Panc1 (cell line): ENCODE measurements at regions of chr11 and their contacts with region 1.

Region 1: GRCh38 chr11:77283101-77283500 is 18.4 kb downstream of the GDPD4 start:
- DNase-seq: no peak
- ATAC-seq: no peak
- H3K4me3 ChIP-seq: no peak overlapping the region
- H3K27ac ChIP-seq: no peak overlapping the region
- H3K4me1 ChIP-seq: no peaks in the 10 kb centered on the region
- H3K27me3 ChIP-seq: no peaks in the 10 kb centered on the region
- CTCF ChIP-seq: 0 out of 2 replicates have a peak, but pooled peaks have one; percentile 6

Region 2: GRCh38 chr11:77217156-77217555 is 65.9 kb before region 1 on chr11:
- CTCF ChIA-PET with region 1: no interaction called
- POLR2A ChIA-PET with region 1: no interaction called
- in situ Hi-C with region 1: no loop called
- intact Hi-C with region 1: no loop called
- DNase-seq: no peak
- ATAC-seq: no peak
- H3K4me3 ChIP-seq: no peak overlapping the region
- H3K27ac ChIP-seq: no peak overlapping the region
- H3K4me1 ChIP-seq: no peaks in the 10 kb centered on the region
- H3K27me3 ChIP-seq: peaks cover 3% of the 10 kb centered on the region
- CTCF ChIP-seq: no peak

Region 3: GRCh38 chr11:77244243-77245027 is 38.7 kb before region 1 on chr11:
- CTCF ChIA-PET with region 1: no interaction called
- POLR2A ChIA-PET with region 1: interaction called, 11 read pairs
- in situ Hi-C with region 1: no loop called
- intact Hi-C with region 1: no loop called
- DNase-seq: peak; percentile 61
- ATAC-seq: peak; percentile 89
- H3K4me3 ChIP-seq: no peak overlapping the region
- H3K27ac ChIP-seq: no peak overlapping the region
- H3K4me1 ChIP-seq: no peaks in the 10 kb centered on the region
- H3K27me3 ChIP-seq: no peaks in the 10 kb centered on the region
- CTCF ChIP-seq: no peak

Region 4: GRCh38 chr11:77361184-77361583 is 78.1 kb after region 1 on chr11:
- CTCF ChIA-PET with region 1: no interaction called
- POLR2A ChIA-PET with region 1: interaction called, 12 read pairs
- in situ Hi-C with region 1: no loop called
- intact Hi-C with region 1: no loop called
- DNase-seq: no peak
- ATAC-seq: no peak
- H3K4me3 ChIP-seq: no peak overlapping the region
- H3K27ac ChIP-seq: no peak overlapping the region
- H3K4me1 ChIP-seq: no peaks in the 10 kb centered on the region
- H3K27me3 ChIP-seq: no peaks in the 10 kb centered on the region
- CTCF ChIP-seq: no peak